ENCODE measurements at regions of chr10 and their contacts with region 1.

Region 1: DNA sequence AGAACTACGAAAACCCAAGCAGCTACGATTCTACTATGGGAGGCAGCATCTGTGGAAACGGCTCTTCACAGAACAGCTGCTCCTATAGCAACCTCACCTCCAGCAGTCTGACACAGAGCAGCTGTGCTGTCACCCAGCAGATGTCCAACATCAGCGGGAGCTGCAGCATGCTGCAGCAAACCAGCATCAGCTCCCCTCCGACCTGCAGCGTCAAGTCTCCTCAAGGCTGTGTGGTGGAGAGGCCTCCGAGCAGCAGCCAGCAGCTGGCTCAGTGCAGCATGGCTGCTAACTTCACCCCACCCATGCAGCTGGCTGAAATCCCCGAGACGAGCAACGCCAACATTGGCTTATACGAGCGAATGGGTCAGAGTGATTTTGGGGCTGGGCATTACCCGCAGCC is 81.6 kb upstream of the SAMD8 start:
- DNase-seq: no peak

Region 2: GRCh38 chr10:75111367-75111906 is 81.6 kb after region 1 on chr10 and contains the start of gene SAMD8:
- intact Hi-C with region 1: loop called in 1 of 2 experiments (anchors 1 kb)
- DNase-seq: peak; percentile 99
- total RNA-seq, gene SAMD8: 26.6 to 29.6 TPM

Measured in posterior vena cava (tissue), 2 donors.